Testis (tissue), 5 donors: ENCODE measurements at regions of chr16 and their contacts with region 1.

Region 1: GRCh38 chr16:21952793-21953540 is at the start of gene UQCRC2:
- DNase-seq: peak; percentile 96
- H3K4me3 ChIP-seq: peak within 1 kb of the TSS; percentile 82 to 93
- H3K27ac ChIP-seq: peak within 1 kb of the TSS; percentile 88 to 89
- H3K4me1 ChIP-seq: peaks cover 18% of the 10 kb centered on the region
- H3K27me3 ChIP-seq: no peaks in the 10 kb centered on the region
- CTCF ChIP-seq: peak in 1 of 3 experiments; percentile 17
- POLR2A ChIP-seq: no peak
- total RNA-seq, gene UQCRC2: 103 to 136 TPM

Region 2: GRCh38 chr16:22001591-22001990 is 48.6 kb after region 1 on chr16:
- intact Hi-C with region 1: no loop called
- DNase-seq: no peak
- H3K4me3 ChIP-seq: no peak overlapping the region
- H3K27ac ChIP-seq: no peak overlapping the region
- H3K4me1 ChIP-seq: peaks cover 12% of the 10 kb centered on the region
- H3K27me3 ChIP-seq: no peaks in the 10 kb centered on the region
- CTCF ChIP-seq: no peak
- POLR2A ChIP-seq: no peak

Region 3: GRCh38 chr16:22188595-22189442 is 235.9 kb after region 1 on chr16:
- intact Hi-C with region 1: loop called (anchors 10 kb)
- DNase-seq: peak; percentile 72
- H3K4me3 ChIP-seq: no peak overlapping the region
- H3K27ac ChIP-seq: peak overlapping the region in 1 of 2 donors; percentile 96
- H3K4me1 ChIP-seq: peaks cover 15% of the 10 kb centered on the region
- H3K27me3 ChIP-seq: no peaks in the 10 kb centered on the region
- CTCF ChIP-seq: peak; percentile 60 to 79 (median 78)
- POLR2A ChIP-seq: no peak